Right cardiac atrium (tissue), 5 donors: ENCODE measurements at regions of chr6 and their contacts with region 1.

Region 1: DNA sequence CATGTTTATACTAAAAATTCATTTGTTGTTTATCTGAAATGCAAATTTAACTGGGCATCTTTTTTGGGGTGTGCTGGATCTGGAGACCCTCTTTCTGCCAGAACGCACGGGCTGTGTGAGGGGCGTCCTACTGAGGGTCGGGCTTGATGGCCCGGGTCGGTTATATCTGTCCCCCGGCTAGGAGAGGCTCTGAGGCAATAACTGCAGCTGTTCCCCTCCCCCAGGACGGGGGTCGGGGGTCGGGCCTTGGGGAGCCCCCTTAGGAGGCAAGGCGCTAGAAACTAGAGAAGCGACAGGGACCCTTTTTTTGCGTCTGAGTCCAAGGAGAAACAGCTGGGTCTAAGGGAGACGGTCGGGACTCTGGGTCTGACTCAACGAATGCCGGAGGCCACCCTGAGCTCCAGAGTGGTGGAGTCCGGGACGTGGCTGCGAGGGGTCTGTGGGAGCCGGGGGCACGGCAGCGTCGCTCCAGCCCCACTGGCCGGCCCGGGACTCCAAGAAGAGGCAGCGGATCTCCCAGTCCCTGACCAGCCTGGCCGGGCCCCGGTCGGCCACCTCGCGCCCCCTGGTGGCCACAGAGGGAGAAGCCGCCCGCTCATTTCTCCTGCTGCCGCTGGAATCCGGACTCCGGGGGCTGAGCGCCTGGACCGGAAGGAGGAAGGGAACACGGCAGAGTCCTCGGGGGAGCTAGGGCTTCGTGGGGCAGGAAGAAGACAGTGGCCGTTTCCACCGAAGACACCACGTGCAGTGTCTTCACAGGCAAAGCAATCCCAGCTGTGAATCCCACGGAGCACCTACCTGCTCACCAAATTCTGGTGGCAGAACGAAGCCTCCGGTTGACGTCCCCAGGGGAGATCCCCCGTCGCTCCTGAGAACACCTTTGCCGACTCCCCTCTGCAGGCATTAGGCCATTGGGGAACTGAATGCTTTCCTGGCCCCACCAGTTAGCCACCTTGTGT is 24.0 kb upstream of the SCML4 start:
- DNase-seq: peak; percentile 87 to 95 (median 93)
- ATAC-seq: peak; percentile 97 to 98
- H3K4me3 ChIP-seq: peak overlapping the region; percentile 31
- H3K27ac ChIP-seq: no peak overlapping the region
- H3K4me1 ChIP-seq: no peaks in the 10 kb centered on the region
- H3K27me3 ChIP-seq: no peaks in the 10 kb centered on the region

Region 2: DNA sequence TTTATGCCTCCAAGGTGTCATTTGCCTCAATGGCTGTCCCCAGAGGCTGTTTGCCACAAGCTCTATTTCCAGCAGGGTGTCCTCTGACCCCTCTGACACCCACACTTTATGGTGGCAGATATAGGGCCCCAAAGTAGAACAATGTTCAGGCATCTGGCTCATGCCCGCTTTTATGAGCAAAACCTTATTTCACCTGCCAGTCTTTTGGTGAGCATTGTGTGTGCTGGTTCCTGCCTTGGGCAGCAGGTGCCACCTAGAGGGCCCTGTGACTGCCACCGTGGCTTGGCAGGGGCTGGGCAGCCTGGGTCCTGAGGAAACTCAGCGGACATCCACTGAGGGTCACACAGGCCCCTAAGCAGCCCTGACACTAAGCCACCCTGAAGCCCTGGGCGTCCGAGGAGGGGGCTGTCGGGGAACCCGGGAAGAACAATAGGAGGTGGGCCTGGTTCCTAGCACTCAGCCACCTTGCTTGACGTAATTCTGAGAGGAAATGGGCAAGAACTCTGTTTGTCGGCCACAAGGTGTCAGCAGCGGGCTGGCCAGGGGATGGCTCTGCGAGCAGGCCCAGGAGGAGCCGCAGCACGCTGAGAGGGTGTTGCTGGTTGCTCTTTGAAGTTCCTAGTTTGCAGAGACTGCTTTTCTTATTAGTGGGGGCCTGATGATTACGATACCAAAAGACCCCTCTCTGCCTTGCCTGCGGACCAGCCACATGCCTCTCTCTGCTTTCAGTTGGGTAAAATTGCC is 173.0 kb before region 1 on chr6:
- intact Hi-C with region 1: loop called (anchors 5 kb)
- DNase-seq: peak; percentile 87 to 94 (median 91)
- ATAC-seq: peak; percentile 92 to 95
- H3K4me3 ChIP-seq: no peak overlapping the region
- H3K27ac ChIP-seq: no peak overlapping the region
- H3K4me1 ChIP-seq: peaks cover 9% of the 10 kb centered on the region
- H3K27me3 ChIP-seq: no peaks in the 10 kb centered on the region

Region 3: GRCh38 chr6:108002365-108003221 is 154.5 kb after region 1 on chr6:
- intact Hi-C with region 1: no loop called
- DNase-seq: no peak
- ATAC-seq: peak in 1 of 2 donors; percentile 47
- H3K4me3 ChIP-seq: no peak overlapping the region
- H3K27ac ChIP-seq: no peak overlapping the region
- H3K4me1 ChIP-seq: no peaks in the 10 kb centered on the region
- H3K27me3 ChIP-seq: no peaks in the 10 kb centered on the region